Sciatic nerve (tissue), 2 donors: ENCODE measurements at regions of chr19 and their contacts with region 1.

Region 1: DNA sequence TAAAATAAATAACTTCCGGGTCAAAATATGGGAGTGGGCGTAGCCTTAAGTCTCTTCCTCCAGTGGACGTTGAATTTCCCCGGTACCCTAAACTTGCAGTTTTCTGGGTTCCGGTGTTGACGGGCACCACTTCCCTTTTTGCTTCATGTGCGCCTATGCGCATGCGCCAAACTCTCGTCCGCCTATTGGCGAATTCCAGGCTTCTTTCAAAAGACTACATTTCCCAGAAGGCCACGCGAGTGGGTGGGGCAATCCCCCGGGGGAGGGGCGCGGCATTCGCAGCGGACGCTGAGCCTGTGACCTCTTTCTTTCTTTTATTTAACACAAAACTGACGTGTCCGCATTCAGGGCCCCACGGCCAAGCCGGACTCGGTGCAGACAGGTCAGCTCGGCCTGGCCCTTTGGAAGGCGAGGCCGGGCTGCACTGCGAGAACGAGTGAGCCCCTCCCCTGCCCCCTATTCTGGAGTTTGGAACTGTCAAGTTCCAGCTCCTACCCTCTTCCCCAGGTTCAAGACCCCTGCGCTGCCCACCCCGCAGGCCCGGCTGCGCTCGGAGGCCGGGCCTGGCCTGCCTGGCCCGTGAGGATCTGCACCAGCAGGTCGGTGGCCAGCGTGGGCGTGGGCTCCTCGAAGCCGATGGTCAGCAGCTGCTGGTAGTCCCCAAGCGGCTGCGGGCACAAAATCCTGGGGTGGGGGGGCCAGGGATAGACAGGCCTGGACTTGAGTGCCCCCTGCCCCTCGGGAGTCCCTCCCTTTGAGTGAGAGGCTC is 4.1 kb downstream of the C19orf67 start:
- DNase-seq: peak; percentile 100
- ATAC-seq: peak; percentile 97

Region 2: DNA sequence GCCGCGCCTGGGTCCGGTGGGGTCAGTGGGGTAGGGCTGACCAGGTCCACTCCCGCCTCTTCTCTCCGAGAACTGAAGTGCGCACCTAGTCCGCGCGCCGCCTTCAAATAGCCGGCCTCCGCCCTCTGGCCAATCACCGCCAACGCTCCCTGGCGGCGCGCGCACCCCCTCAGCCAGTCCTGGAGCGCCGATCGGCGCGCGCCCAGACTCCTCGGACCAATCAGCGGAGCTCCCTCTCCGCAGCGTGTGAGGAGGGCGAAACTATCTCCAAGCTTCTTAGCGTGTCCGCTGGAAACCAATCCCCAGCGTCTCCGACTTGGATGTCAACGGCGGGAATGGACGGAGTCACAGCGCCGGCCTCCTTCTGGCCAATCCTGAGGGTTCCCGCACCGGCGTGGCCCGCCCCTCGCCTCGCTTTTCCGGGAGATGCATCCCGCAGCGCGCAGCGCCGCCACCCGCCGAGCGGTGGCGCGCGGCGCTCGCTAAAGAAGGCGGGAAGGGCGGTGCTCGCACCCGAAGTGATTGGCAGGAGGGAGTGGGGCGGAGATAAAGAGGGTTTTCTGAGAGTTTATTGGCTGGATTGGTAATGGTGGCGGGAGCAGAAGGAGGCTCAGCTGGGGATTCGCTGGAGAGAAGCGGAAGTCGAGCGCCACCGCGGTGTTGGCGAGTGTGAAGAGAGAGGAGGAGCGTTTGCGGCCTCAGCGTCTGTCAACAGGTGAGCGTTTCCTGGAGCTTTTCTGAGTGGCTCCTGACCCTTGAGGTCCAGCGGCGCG is 55.2 kb after region 1 on chr19 and contains the start of gene ASF1B:
- intact Hi-C with region 1: loop called (anchors 10 kb)
- DNase-seq: peak; percentile 98
- ATAC-seq: peak; percentile 97
- total RNA-seq, gene ASF1B: 0.22 TPM